ENCODE measurements at regions of chr11 and their contacts with region 1.

Region 1: GRCh38 chr11:18775492-18776292 is 15.9 kb downstream of the PTPN5 start:
- DNase-seq: peak; percentile 82
- H3K4me3 Mint-ChIP-seq: no peak overlapping the region
- H3K27ac Mint-ChIP-seq: no peak overlapping the region
- H3K4me1 Mint-ChIP-seq: peaks cover 8% of the 10 kb centered on the region
- H3K27me3 Mint-ChIP-seq: peaks cover 8% of the 10 kb centered on the region

Region 2: DNA sequence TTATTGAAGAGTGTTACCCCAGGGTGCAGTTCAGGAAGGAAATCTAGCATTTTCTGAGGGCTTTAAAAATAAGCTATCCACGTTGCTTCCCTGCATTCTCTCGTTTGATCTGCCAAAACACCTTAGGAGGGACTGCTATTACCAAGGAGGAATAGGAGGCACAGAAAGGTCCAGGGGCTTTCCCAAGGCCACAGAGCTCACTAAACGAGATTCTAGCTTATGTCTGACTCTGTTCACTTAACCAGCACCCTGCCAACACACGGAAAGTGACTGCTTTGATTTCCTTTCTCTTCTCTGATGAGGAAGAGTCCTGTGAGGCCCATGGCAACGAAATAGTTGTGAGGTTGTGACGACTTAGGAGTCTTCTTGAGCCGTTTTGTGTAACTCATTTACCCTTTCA is 19.3 kb after region 1 on chr11:
- CTCF ChIA-PET with region 1: interaction called, 35 read pairs
- POLR2A ChIA-PET with region 1: no interaction called
- intact Hi-C with region 1: loop called (anchors 2 kb)
- DNase-seq: no peak
- H3K4me3 Mint-ChIP-seq: no peak overlapping the region
- H3K27ac Mint-ChIP-seq: no peak overlapping the region
- H3K4me1 Mint-ChIP-seq: peaks cover 3% of the 10 kb centered on the region
- H3K27me3 Mint-ChIP-seq: peaks cover 34% of the 10 kb centered on the region

Region 3: DNA sequence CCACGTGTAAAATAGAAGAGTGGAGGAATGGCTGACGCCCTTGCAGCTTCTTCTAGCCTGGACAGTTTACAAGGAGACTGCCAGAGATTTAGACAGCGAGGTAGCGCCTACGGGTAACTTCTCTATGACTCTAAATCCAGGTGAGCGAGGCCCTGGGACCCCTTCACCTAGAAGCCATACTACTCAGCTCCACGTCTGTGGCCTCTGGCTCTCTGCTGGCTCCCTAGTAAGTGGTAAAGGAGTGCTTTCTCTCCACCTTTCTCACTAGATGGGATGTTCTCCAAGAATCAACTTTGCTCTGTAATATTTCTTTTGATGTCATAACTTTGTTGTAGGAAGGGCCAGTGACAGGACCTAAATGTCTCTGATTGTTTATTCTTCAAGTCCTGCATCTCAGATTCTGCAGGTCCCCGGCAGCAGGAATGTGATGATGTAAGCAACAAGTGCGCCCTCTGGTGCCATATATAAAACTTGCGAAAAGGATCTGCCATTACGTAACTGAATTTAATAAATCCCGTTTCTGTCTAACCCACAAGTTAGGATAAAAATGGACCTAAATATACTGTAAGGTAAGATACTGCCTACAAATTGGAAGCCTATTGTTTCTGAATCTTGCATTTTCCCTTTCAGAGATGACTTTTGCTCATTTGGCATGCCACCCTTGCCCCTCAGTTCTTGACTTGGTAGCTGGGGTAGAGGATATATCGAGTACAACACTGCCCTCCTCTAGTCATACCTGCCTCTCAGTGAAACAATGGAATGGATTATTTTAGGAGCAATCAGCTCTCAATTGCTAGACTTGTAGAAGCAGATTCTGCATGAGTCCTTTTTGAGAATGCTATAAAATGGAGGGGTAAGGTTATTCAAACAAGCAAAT is 26.9 kb after region 1 on chr11:
- CTCF ChIA-PET with region 1: interaction called, 39 read pairs
- POLR2A ChIA-PET with region 1: no interaction called
- intact Hi-C with region 1: loop called (anchors 1 kb)
- DNase-seq: peak; percentile 50
- H3K4me3 Mint-ChIP-seq: no peak overlapping the region
- H3K27ac Mint-ChIP-seq: no peak overlapping the region
- H3K4me1 Mint-ChIP-seq: no peaks in the 10 kb centered on the region
- H3K27me3 Mint-ChIP-seq: peaks cover 7% of the 10 kb centered on the region

Region 4: GRCh38 chr11:18853086-18853720 is 77.5 kb after region 1 on chr11:
- CTCF ChIA-PET with region 1: interaction called, 8 read pairs
- POLR2A ChIA-PET with region 1: no interaction called
- intact Hi-C with region 1: loop called (anchors 1 kb)
- DNase-seq: no peak
- H3K4me3 Mint-ChIP-seq: no peak overlapping the region
- H3K27ac Mint-ChIP-seq: no peak overlapping the region
- H3K4me1 Mint-ChIP-seq: no peaks in the 10 kb centered on the region
- H3K27me3 Mint-ChIP-seq: peaks cover 27% of the 10 kb centered on the region

Region 5: DNA sequence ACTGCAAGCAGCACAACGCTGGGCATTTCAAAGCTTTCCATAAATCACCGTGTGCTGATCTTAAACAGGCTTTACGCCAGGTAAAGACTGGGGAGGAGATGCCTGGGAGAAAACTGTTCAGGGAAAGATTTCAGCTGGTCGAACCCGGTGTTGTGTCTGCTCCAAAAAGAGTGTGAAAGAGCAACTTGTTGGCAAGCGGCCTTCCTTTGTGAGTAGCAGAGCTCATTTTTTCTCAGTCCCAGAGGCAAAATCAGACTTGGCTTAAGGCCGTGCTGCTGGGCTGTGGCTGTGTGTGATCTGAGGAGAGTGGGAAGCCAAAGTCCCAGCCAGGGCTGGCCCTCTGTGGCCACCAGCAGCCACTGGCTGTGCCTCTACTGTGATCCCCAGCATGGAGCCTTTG is 540.7 kb after region 1 on chr11:
- CTCF ChIA-PET with region 1: no interaction called
- POLR2A ChIA-PET with region 1: no interaction called
- intact Hi-C with region 1: no loop called
- DNase-seq: no peak
- H3K4me3 Mint-ChIP-seq: no peak overlapping the region
- H3K27ac Mint-ChIP-seq: no peak overlapping the region
- H3K4me1 Mint-ChIP-seq: no peaks in the 10 kb centered on the region
- H3K27me3 Mint-ChIP-seq: peaks cover 11% of the 10 kb centered on the region

Measured in activated CD4-positive, alpha-beta memory T cell treated with anti-CD3 and anti-CD28 coated beads for 36 hours (primary cell).